ENCODE measurements at regions of chr1 and their contacts with region 1.

Region 1: GRCh38 chr1:245380790-245381535 is 226.2 kb downstream of the KIF26B start:
- DNase-seq: no peak
- H3K4me3 Mint-ChIP-seq: no peak overlapping the region
- H3K27ac Mint-ChIP-seq: no peak overlapping the region
- H3K4me1 Mint-ChIP-seq: peaks cover 22% of the 10 kb centered on the region
- H3K27me3 Mint-ChIP-seq: peaks cover 10% of the 10 kb centered on the region

Region 2: DNA sequence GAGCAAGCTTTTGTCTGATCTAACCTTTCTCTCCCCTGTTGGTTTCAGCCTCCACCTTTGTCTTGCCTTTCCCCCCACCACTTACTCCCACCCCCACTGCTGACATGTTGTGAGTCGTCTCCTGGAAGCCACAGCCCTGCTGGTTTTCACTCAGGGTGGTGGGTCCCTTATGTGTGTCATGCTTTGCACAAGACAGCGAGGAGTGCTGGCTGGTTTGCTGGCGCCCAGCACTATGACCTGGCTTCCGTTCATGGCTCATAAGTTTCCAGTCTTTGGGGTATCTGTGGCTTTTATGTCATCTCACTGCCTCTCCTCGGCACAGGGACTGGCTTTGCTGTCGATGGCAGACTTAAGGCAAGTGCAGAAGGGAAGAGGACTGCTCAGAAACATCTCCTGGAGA is 48.5 kb before region 1 on chr1:
- intact Hi-C with region 1: loop called (anchors 1 kb)
- DNase-seq: no peak
- H3K4me3 Mint-ChIP-seq: no peak overlapping the region
- H3K27ac Mint-ChIP-seq: no peak overlapping the region
- H3K4me1 Mint-ChIP-seq: peaks cover 4% of the 10 kb centered on the region
- H3K27me3 Mint-ChIP-seq: peaks cover 1% of the 10 kb centered on the region

Measured in activated T-helper 2 cell treated with anti-CD3 and anti-CD28 coated beads, Interferon-gamma antibody, Interleukin-2, Interleukin-4, amounts not matched to agents 10 μg/mL and 5 μg/mL and 100 μg/mL, durations not matched to agents 14 hours and 24 hours and 36 hours (primary cell).